Transverse colon (tissue), 4 donors: ENCODE measurements at regions of chr13 and their contacts with region 1.

Region 1: GRCh38 chr13:50645092-50645491 is 198.4 kb downstream of the DLEU7 start:
- DNase-seq: no peak
- H3K4me3 ChIP-seq: no peak overlapping the region
- H3K27ac ChIP-seq: no peak overlapping the region
- H3K4me1 ChIP-seq: no peaks in the 10 kb centered on the region
- H3K27me3 ChIP-seq: no peaks in the 10 kb centered on the region
- CTCF ChIP-seq: no peak
- EP300 ChIP-seq: no peak
- POLR2A ChIP-seq: no peak

Region 2: DNA sequence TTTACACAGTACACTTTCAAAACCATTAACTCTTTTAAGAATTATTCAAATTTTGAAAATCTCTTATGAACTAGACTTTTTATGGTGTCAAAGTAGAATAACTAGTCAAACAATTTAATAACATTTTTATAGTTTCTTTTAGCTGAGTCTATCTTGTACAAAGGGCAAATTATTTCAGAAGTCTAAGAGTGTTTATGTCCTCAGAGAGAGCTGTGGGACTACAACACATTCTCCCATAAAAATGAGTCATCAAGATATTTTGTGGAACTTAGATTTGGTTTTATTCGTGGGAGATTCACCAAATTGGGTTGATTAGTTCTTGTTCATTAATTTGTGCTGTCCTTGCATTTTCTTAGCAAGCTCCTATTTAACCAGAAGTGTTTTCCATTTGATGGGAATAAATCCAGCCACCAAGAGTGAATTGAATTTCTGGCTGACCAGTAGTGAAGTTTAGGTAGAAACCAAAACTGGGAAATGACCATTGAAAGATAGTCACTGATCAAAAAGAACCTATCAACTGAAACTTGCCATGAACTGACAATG is 92.6 kb before region 1 on chr13:
- in situ Hi-C with region 1: no loop called
- intact Hi-C with region 1: loop called (anchors 5 kb)
- DNase-seq: no peak
- H3K4me3 ChIP-seq: no peak overlapping the region
- H3K27ac ChIP-seq: no peak overlapping the region
- H3K4me1 ChIP-seq: no peaks in the 10 kb centered on the region
- H3K27me3 ChIP-seq: no peaks in the 10 kb centered on the region
- CTCF ChIP-seq: no peak
- EP300 ChIP-seq: no peak
- POLR2A ChIP-seq: no peak